ENCODE measurements at regions of chr19 and their contacts with region 1.

Region 1: DNA sequence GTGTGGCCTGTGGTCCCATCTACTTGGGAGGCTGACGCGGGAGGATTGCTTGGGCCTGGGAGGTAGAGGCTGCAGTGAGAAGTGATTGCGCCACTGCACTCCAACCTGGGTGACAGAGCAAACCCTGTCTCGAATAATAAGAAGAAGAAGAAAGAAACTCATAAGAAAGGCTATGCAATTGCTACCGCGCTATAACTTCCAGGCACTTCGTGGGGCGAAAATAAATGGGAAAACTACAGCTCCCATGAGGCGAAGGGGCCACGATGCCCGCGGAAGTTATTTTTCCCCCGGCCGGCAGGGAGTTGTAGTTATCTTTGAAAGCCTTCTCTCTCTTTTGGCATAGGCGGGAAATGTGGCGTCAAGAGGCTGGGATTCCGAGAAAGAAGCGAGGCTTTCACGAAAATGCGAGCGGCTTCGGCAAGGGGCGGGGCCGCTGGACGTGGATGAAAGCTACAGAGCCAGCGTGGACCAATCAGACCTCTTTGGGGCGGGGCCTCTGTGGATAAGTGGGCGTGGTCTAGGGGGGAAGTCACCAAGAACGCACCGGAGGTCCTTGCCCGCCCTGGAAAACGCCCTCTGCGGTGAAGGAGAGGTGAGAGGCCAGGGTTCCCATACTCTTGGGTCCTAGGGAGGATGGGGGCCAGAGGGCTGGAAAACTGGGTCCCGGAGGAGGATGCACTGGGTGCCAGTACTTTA is at the start of gene NUCB1:
- DNase-seq: peak; percentile 96 to 99 (median 97)
- H3K4me3 ChIP-seq: peak within 1 kb of the TSS; percentile 96
- H3K4me3 Mint-ChIP-seq: peak within 1 kb of the TSS; percentile 89 to 100 (median 97)
- H3K27ac ChIP-seq: peak within 1 kb of the TSS; percentile 88
- H3K27ac Mint-ChIP-seq: peak within 1 kb of the TSS; percentile 77 to 98 (median 96)
- H3K4me1 ChIP-seq: peaks cover 17% of the 10 kb centered on the region
- H3K4me1 Mint-ChIP-seq: peaks cover 24 to 40% (median 29%) of the 10 kb centered on the region in 3 donors
- H3K27me3 ChIP-seq: peaks cover 5% of the 10 kb centered on the region
- H3K27me3 Mint-ChIP-seq: peaks cover 9 to 14% of the 10 kb centered on the region in 2 donors
- total RNA-seq, gene NUCB1: 86.8 to 93.3 TPM

Region 2: GRCh38 chr19:48872182-48872883 is 27.6 kb before region 1 on chr19 and contains the start of gene PPP1R15A:
- CTCF ChIA-PET with region 1: interaction called, 3 read pairs
- POLR2A ChIA-PET with region 1: interaction called, 17 read pairs
- DNase-seq: peak; percentile 92 to 99 (median 98)
- H3K4me3 ChIP-seq: peak within 1 kb of the TSS; percentile 95
- H3K4me3 Mint-ChIP-seq: peak within 1 kb of the TSS; percentile 97 to 100 (median 99)
- H3K27ac ChIP-seq: peak within 1 kb of the TSS; percentile 100
- H3K27ac Mint-ChIP-seq: peak within 1 kb of the TSS; percentile 99 to 100 (median 100)
- H3K4me1 ChIP-seq: peaks cover 32% of the 10 kb centered on the region
- H3K4me1 Mint-ChIP-seq: peaks cover 39 to 45% (median 43%) of the 10 kb centered on the region in 3 donors
- H3K27me3 ChIP-seq: no peaks in the 10 kb centered on the region
- H3K27me3 Mint-ChIP-seq: peaks cover 4 to 14% of the 10 kb centered on the region in 2 donors
- total RNA-seq, gene PPP1R15A: 67.1 to 69.3 TPM

Region 3: DNA sequence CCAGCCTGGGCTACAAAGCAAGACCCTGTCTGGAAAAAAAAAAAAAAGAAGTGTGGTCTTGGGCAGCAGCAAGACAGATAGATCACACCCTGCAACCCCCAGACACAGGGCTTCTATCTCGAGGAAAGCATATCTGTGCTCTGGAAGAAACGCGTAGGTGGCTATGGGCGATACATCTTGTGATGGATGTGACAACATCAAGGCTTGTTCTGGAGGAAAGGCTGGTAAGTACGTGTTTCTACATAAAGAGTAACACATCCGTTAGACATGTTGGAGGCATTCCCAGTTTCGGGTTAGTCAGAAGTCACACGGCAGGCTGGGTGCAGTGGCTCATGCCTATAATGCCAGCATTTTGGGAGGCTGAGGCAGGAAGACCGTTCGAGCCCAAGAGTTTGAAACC is 27.0 kb after region 1 on chr19:
- CTCF ChIA-PET with region 1: no interaction called
- POLR2A ChIA-PET with region 1: no interaction called
- DNase-seq: peak in 1 of 5 donors; percentile 11
- H3K4me3 ChIP-seq: no peak overlapping the region
- H3K4me3 Mint-ChIP-seq: peak overlapping the region in 3 of 7 donors; percentile 22 to 61 (median 32)
- H3K27ac ChIP-seq: no peak overlapping the region
- H3K27ac Mint-ChIP-seq: peak overlapping the region in 2 of 8 donors; percentile 47 to 58
- H3K4me1 ChIP-seq: no peaks in the 10 kb centered on the region
- H3K4me1 Mint-ChIP-seq: peaks cover 0 to 4% (median 0%) of the 10 kb centered on the region in 3 donors
- H3K27me3 ChIP-seq: no peaks in the 10 kb centered on the region
- H3K27me3 Mint-ChIP-seq: no peaks in the 10 kb centered on the region

Measured in CD8-positive, alpha-beta memory T cell (primary cell).